BJ (cell line): ENCODE measurements at regions of chr10 and their contacts with region 1.

Region 1: GRCh38 chr10:110681023-110681681 is 37.0 kb downstream of the RBM20 start:
- DNase-seq: no peak
- H3K4me3 ChIP-seq: no peak overlapping the region
- H3K27me3 ChIP-seq: peaks cover 14% of the 10 kb centered on the region
- CTCF ChIP-seq: peak; percentile 65

Region 2: DNA sequence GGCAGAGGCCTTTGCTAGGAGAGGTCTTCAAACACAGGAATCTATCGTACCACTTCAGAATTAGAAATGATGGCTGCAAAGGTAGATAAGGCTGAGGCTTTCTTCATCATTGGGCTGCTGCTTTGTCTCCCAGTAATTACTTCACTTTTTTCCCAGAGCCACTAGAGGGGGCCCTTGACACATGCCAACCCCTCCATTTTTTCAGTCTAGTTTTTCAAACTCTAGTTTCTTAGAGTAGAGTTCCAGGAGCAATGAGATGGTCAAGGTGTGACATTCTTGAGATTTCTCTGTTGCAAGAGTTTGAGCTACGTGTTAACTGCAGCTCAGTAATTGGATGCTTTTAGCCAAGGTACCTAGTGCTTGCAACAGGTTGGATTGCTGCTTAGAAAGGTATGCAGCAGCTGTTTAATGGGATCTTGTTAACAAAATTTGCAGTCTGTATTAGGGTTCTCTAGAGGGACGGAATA is 70.8 kb before region 1 on chr10:
- CTCF ChIA-PET with region 1: interaction called, 16 read pairs
- POLR2A ChIA-PET with region 1: no interaction called
- DNase-seq: no peak
- H3K4me3 ChIP-seq: no peak overlapping the region
- H3K27me3 ChIP-seq: peaks cover 4% of the 10 kb centered on the region
- CTCF ChIP-seq: peak; percentile 88